Naive thymus-derived CD4-positive, alpha-beta T cell (primary cell): ENCODE measurements at regions of chr4 and their contacts with region 1.

Region 1: GRCh38 chr4:47032415-47033106 is 1.2 kb downstream of the GABRB1 start:
- DNase-seq: peak in 3 of 9 donors; percentile 13 to 27 (median 17)
- ATAC-seq: peak; percentile 72
- H3K4me3 ChIP-seq: peak overlapping the region; percentile 32
- H3K4me3 Mint-ChIP-seq: peak overlapping the region; percentile 47 to 79 (median 73)
- H3K27ac ChIP-seq: no peak overlapping the region
- H3K27ac Mint-ChIP-seq: no peak overlapping the region
- H3K4me1 ChIP-seq: peaks cover 5 to 12% of the 10 kb centered on the region in 2 donors
- H3K4me1 Mint-ChIP-seq: peaks cover 12 to 21% (median 17%) of the 10 kb centered on the region in 7 donors
- H3K27me3 ChIP-seq: peaks cover 0 to 14% of the 10 kb centered on the region in 2 donors
- H3K27me3 Mint-ChIP-seq: peaks cover 48 to 65% (median 59%) of the 10 kb centered on the region in 5 donors

Region 2: GRCh38 chr4:46844325-46844917 is 188.1 kb before region 1 on chr4:
- CTCF ChIA-PET with region 1: interaction called, 3 read pairs
- POLR2A ChIA-PET with region 1: no interaction called
- intact Hi-C with region 1: loop called (anchors 1 to 5 kb)
- DNase-seq: peak in 6 of 9 donors; percentile 1 to 24 (median 9)
- ATAC-seq: peak; percentile 61
- H3K4me3 ChIP-seq: no peak overlapping the region
- H3K4me3 Mint-ChIP-seq: no peak overlapping the region
- H3K27ac ChIP-seq: no peak overlapping the region
- H3K27ac Mint-ChIP-seq: no peak overlapping the region
- H3K4me1 ChIP-seq: no peaks in the 10 kb centered on the region
- H3K4me1 Mint-ChIP-seq: peaks cover 0 to 2% (median 0%) of the 10 kb centered on the region in 7 donors
- H3K27me3 ChIP-seq: no peaks in the 10 kb centered on the region
- H3K27me3 Mint-ChIP-seq: peaks cover 0 to 11% (median 5%) of the 10 kb centered on the region in 5 donors

Region 3: DNA sequence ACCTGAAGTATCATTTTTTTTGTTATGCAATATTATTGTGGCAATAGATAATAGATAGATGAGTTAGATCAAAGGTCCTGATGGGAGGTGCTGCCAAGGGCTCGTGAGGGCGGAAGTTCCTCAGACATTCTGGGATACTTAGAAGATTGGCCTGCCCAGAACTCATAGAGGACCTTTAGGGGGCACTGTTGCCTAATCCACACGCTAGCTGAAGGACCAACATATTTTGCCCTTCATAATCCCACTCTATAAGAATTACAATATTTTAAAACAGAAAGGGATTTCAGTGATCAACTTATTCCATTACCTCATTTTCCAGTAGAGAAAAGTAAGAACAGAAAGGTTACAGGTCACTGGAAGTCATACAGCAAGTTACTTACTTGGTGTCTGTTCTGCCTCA is 100.6 kb before region 1 on chr4:
- CTCF ChIA-PET with region 1: no interaction called
- POLR2A ChIA-PET with region 1: no interaction called
- intact Hi-C with region 1: loop called in 1 of 2 experiments (anchors 1 kb)
- DNase-seq: peak in 1 of 9 donors; percentile 2
- ATAC-seq: no peak
- H3K4me3 ChIP-seq: no peak overlapping the region
- H3K4me3 Mint-ChIP-seq: no peak overlapping the region
- H3K27ac ChIP-seq: no peak overlapping the region
- H3K27ac Mint-ChIP-seq: no peak overlapping the region
- H3K4me1 ChIP-seq: no peaks in the 10 kb centered on the region
- H3K4me1 Mint-ChIP-seq: no peaks in the 10 kb centered on the region
- H3K27me3 ChIP-seq: peaks cover 0 to 2% of the 10 kb centered on the region in 2 donors
- H3K27me3 Mint-ChIP-seq: peaks cover 0 to 15% (median 4%) of the 10 kb centered on the region in 5 donors

Region 4: GRCh38 chr4:46979283-46979682 is 53.3 kb before region 1 on chr4:
- CTCF ChIA-PET with region 1: no interaction called
- POLR2A ChIA-PET with region 1: no interaction called
- intact Hi-C with region 1: no loop called
- DNase-seq: no peak
- ATAC-seq: no peak
- H3K4me3 ChIP-seq: no peak overlapping the region
- H3K4me3 Mint-ChIP-seq: no peak overlapping the region
- H3K27ac ChIP-seq: no peak overlapping the region
- H3K27ac Mint-ChIP-seq: no peak overlapping the region
- H3K4me1 ChIP-seq: no peaks in the 10 kb centered on the region
- H3K4me1 Mint-ChIP-seq: no peaks in the 10 kb centered on the region
- H3K27me3 ChIP-seq: no peaks in the 10 kb centered on the region
- H3K27me3 Mint-ChIP-seq: peaks cover 0 to 43% (median 28%) of the 10 kb centered on the region in 5 donors

Region 5: DNA sequence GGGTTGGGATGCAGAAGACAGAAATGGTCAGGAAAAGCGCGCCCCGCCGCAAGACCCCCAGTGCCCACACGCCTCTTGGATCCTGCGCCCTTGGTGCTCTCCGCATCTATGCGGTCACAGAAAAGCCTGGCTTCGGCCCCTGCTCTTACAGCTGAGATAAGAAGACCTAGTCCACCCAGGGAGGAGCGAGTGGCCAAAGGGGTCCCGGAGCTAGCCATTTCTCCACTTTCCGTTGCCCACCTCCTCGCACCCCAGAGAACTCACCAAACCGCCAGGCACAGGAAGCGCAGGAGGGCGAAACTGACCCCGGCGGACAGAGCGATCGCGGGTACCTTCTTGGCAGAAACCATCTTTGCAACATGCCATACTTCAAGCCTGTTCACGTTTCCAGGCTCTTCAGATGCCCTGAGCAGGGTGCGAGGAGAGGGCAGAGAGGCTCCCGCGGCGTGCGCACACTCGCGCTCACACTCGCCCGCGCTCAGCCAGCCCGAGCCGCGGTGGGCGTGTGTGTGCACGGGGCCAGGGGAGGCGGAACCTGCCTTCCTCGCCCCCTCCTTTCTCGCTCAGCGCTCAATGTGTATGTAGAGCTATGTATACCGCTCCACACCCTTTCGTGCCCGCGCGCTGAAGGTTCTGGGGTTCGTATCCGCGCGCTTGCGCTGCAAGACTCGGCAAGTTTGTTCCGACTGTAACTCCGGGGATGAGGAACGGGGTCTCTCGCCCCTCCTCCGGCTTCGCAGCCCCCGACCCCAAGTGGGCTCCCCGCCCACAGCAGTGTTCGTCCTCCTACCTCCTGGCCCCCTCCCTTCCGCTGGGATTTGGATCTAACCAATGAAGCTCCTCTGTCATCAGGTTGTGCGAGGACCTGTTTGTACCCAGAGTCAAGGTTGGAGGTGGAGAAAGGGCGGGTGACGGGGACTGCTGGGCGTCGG is 39.2 kb before region 1 on chr4 and contains the start of gene GABRA4:
- CTCF ChIA-PET with region 1: no interaction called
- POLR2A ChIA-PET with region 1: no interaction called
- intact Hi-C with region 1: loop called in 1 of 2 experiments (anchors 2 kb)
- DNase-seq: no peak
- ATAC-seq: no peak
- H3K4me3 ChIP-seq: no peak within 1 kb of the TSS
- H3K4me3 Mint-ChIP-seq: peak within 1 kb of the TSS; percentile 41 to 72 (median 62)
- H3K27ac ChIP-seq: no peak within 1 kb of the TSS
- H3K27ac Mint-ChIP-seq: no peak within 1 kb of the TSS
- H3K4me1 ChIP-seq: no peaks in the 10 kb centered on the region
- H3K4me1 Mint-ChIP-seq: peaks cover 0 to 25% (median 16%) of the 10 kb centered on the region in 7 donors
- H3K27me3 ChIP-seq: no peaks in the 10 kb centered on the region
- H3K27me3 Mint-ChIP-seq: peaks cover 49 to 71% (median 60%) of the 10 kb centered on the region in 5 donors
- total RNA-seq, gene GABRA4: not detected

Region 6: DNA sequence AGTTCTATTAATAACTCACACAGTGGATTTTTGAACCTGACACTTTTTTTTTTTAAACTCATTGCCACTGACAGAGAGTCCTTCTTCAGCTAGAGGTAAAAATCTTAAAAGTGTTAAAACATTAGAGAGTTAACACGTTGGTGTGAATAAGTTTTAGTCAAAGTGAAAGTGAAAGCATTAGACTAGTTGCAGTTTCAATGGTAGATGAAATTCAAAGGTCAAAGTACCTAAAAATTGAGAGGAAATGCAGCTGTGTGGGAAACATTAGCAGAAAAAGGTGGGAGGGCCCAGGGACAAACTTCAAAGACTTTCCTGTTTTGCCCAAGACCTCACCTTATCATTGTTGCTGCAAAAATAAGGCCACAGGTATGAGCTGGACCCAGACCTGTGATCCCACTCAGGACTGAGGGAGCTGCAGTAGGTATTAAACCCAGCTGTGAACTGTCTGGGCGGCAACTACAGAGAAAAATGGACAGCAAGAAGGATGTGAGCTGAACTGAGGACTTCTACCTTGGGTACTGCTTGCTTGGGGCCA is 21.6 kb before region 1 on chr4:
- CTCF ChIA-PET with region 1: no interaction called
- POLR2A ChIA-PET with region 1: no interaction called
- intact Hi-C with region 1: loop called in 1 of 2 experiments (anchors 1 kb)
- DNase-seq: peak in 5 of 9 donors; percentile 5 to 28 (median 24)
- ATAC-seq: peak; percentile 60
- H3K4me3 ChIP-seq: peak overlapping the region; percentile 39
- H3K4me3 Mint-ChIP-seq: peak overlapping the region; percentile 53 to 82 (median 65)
- H3K27ac ChIP-seq: no peak overlapping the region
- H3K27ac Mint-ChIP-seq: peak overlapping the region; percentile 50 to 86 (median 76)
- H3K4me1 ChIP-seq: peaks cover 9 to 13% of the 10 kb centered on the region in 2 donors
- H3K4me1 Mint-ChIP-seq: peaks cover 10 to 35% (median 24%) of the 10 kb centered on the region in 7 donors
- H3K27me3 ChIP-seq: no peaks in the 10 kb centered on the region
- H3K27me3 Mint-ChIP-seq: no peaks in the 10 kb centered on the region